ENCODE measurements at regions of chr14 and their contacts with region 1.

Region 1: GRCh38 chr14:103104654-103105452 is 10.3 kb downstream of the EXOC3L4 start:
- DNase-seq: peak; percentile 54
- H3K4me3 ChIP-seq: no peak overlapping the region
- H3K27ac ChIP-seq: no peak overlapping the region
- H3K4me1 ChIP-seq: peaks cover 4% of the 10 kb centered on the region
- H3K27me3 ChIP-seq: peaks cover 28% of the 10 kb centered on the region
- CTCF ChIP-seq: peak; percentile 95 to 99 (median 96)
- POLR2A ChIP-seq: no peak

Region 2: DNA sequence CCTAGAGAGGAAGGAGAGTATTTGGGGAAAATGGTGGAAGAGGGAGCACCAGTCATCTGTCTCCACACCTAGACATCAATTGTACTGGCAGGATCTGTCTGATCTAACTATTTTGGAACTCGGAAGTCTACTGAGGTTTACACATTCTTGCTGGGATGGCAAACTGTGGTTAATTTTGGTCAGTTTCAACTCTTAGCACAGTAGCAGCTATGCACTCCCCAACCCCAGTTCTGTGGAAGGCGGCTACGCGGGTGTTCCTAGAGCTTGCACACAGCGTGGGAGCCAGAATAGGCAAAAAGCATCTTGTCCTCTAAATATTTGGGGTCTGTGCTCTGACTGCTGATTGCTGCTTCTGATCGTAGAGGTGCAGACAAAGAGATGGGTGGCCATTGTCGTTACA is 708.3 kb before region 1 on chr14:
- intact Hi-C with region 1: no loop called
- DNase-seq: no peak
- H3K4me3 ChIP-seq: no peak overlapping the region
- H3K27ac ChIP-seq: no peak overlapping the region
- H3K4me1 ChIP-seq: no peaks in the 10 kb centered on the region
- H3K27me3 ChIP-seq: no peaks in the 10 kb centered on the region
- CTCF ChIP-seq: no peak
- POLR2A ChIP-seq: no peak

Region 3: DNA sequence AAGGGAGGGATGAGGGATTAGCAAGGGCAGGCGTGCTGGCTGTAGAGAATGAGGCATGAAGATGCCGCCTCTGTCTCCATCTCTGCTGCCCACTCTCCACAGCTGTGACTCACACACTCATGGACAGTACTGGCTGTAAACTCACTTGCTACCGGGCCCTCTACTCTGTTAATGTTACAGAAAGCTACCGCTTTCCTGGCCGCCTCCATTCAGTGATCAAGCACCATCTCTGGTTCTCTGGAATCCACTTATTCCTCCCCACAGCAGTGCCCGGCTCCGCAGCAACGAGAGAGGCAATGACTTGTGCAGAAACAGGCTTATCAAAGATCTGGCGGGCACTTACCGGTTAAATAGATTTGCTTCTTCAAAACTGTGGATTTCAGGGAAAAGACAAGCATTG is 147.6 kb before region 1 on chr14:
- intact Hi-C with region 1: no loop called
- DNase-seq: no peak
- H3K4me3 ChIP-seq: no peak overlapping the region
- H3K27ac ChIP-seq: no peak overlapping the region
- H3K4me1 ChIP-seq: no peaks in the 10 kb centered on the region
- H3K27me3 ChIP-seq: no peaks in the 10 kb centered on the region
- CTCF ChIP-seq: no peak
- POLR2A ChIP-seq: no peak

Region 4: GRCh38 chr14:103185051-103185992 is 80.5 kb after region 1 on chr14:
- intact Hi-C with region 1: loop called (anchors 5 kb)
- DNase-seq: no peak
- H3K4me3 ChIP-seq: no peak overlapping the region
- H3K27ac ChIP-seq: no peak overlapping the region
- H3K4me1 ChIP-seq: no peaks in the 10 kb centered on the region
- H3K27me3 ChIP-seq: no peaks in the 10 kb centered on the region
- CTCF ChIP-seq: peak in 3 of 4 experiments; percentile 66 to 82 (median 67)
- POLR2A ChIP-seq: no peak

Measured in prostate gland (tissue), 2 donors.